Right lobe of liver (tissue), 6 donors: ENCODE measurements at regions of chr12 and their contacts with region 1.

Region 1: DNA sequence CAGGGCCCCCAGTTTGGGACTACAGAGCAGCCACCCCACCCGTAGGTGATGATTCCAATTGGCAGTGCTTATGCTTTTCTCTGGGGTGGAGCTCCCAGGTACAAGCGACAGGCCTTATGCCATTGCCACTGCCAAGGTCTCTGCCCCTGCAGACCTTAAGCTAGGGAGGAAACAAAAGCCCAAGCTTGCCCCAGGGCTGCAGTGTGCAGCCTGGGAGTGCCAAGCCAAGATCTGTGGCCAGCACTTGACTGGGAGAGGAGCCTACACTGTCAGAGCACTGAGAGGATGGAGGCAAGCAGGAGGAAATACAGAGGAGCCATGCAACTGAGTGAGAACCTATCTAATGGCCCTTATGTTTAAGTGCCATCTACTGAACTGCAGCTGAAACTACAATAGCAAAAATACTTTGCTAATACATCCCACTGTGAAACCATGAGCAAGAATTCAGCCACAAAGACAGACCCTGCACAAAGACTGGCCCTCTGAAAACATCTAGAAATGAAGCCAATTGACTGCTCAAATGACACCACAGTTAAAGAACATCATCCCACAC is 17.7 kb upstream of the ASCL1 start:
- DNase-seq: peak in 1 of 3 donors; percentile 55
- ATAC-seq: peak; percentile 96 to 98 (median 98)
- H3K4me3 ChIP-seq: no peak overlapping the region
- H3K27ac ChIP-seq: peak overlapping the region in 1 of 3 donors; percentile 27
- H3K4me1 ChIP-seq: peaks cover 0 to 9% (median 3%) of the 10 kb centered on the region in 4 donors
- H3K27me3 ChIP-seq: no peaks in the 10 kb centered on the region
- CTCF ChIP-seq: peak; percentile 49 to 66 (median 62)
- POLR2A ChIP-seq: no peak

Region 2: GRCh38 chr12:102883204-102883799 is 56.4 kb before region 1 on chr12:
- intact Hi-C with region 1: loop called (anchors 10 kb)
- DNase-seq: peak in 2 of 3 donors; percentile 67
- ATAC-seq: peak; percentile 32 to 68 (median 59)
- H3K4me3 ChIP-seq: no peak overlapping the region
- H3K27ac ChIP-seq: peak overlapping the region in 1 of 3 donors; percentile 29
- H3K4me1 ChIP-seq: peaks cover 0 to 47% (median 18%) of the 10 kb centered on the region in 4 donors
- H3K27me3 ChIP-seq: no peaks in the 10 kb centered on the region
- CTCF ChIP-seq: peak; percentile 66 to 87 (median 80)
- POLR2A ChIP-seq: no peak